CD4-positive, alpha-beta memory T cell (primary cell): ENCODE measurements at regions of chr2 and their contacts with region 1.

Region 1: GRCh38 chr2:218063486-218063885 is 5.6 kb upstream of the RUFY4 start:
- DNase-seq: no peak
- H3K4me3 ChIP-seq: no peak overlapping the region
- H3K4me3 Mint-ChIP-seq: no peak overlapping the region
- H3K27ac ChIP-seq: no peak overlapping the region
- H3K27ac Mint-ChIP-seq: peak overlapping the region in 1 of 7 donors; percentile 33
- H3K4me1 ChIP-seq: peaks cover 1% of the 10 kb centered on the region
- H3K4me1 Mint-ChIP-seq: peaks cover 0 to 2% (median 1%) of the 10 kb centered on the region in 4 donors
- H3K27me3 ChIP-seq: no peaks in the 10 kb centered on the region
- H3K27me3 Mint-ChIP-seq: peaks cover 14 to 38% of the 10 kb centered on the region in 2 donors

Region 2: DNA sequence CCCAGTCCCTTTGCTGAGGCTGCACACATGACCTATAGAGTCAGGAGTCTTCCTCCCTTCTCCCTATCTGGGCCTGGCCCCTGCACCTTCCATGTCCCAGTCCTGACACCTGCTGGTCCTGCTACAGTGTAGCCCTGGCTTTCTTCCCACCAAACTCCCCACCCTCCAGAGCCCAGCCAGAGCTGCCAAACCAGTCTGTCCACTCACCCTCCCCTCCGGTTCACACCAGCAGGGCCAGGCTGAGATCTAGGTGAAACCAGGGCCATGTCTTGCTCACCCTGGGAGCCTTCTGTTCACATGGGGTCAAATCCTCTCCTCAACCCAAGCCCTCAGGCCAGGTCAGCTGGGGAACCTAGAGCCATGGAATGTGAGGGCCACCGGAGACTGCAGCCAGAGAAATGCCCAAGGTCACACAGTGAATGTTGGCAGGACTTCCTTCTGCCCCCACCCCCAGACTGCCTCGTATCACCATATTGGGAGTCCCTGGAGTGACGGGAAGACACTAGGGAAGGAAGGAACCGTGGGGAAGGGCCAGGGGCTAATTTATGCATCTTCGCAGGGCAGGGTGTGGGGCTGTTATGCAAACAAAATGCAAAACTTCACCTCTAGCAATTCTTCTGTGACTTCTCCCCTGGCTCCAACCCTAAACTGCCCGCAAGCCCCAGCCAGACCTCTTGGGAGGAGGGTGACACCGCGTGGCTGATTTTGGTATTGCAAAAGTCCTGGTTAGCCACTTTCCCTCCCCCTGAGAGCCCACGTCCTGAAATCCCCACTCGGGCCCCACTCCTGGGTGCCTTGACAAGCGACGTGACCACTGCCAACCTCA is 75.3 kb before region 1 on chr2:
- CTCF ChIA-PET with region 1: no interaction called
- POLR2A ChIA-PET with region 1: no interaction called
- intact Hi-C with region 1: no loop called
- DNase-seq: peak in 4 of 5 donors; percentile 10 to 32 (median 26)
- H3K4me3 ChIP-seq: no peak overlapping the region
- H3K4me3 Mint-ChIP-seq: no peak overlapping the region
- H3K27ac ChIP-seq: no peak overlapping the region
- H3K27ac Mint-ChIP-seq: no peak overlapping the region
- H3K4me1 ChIP-seq: no peaks in the 10 kb centered on the region
- H3K4me1 Mint-ChIP-seq: peaks cover 0 to 3% (median 0%) of the 10 kb centered on the region in 4 donors
- H3K27me3 ChIP-seq: no peaks in the 10 kb centered on the region
- H3K27me3 Mint-ChIP-seq: peaks cover 2 to 3% of the 10 kb centered on the region in 2 donors

Region 3: GRCh38 chr2:218074031-218074430 is 10.5 kb after region 1 on chr2:
- CTCF ChIA-PET with region 1: interaction called, 11 read pairs
- POLR2A ChIA-PET with region 1: no interaction called
- intact Hi-C with region 1: no loop called
- DNase-seq: no peak
- H3K4me3 ChIP-seq: no peak overlapping the region
- H3K4me3 Mint-ChIP-seq: no peak overlapping the region
- H3K27ac ChIP-seq: no peak overlapping the region
- H3K27ac Mint-ChIP-seq: peak overlapping the region in 1 of 7 donors; percentile 62
- H3K4me1 ChIP-seq: peaks cover 5% of the 10 kb centered on the region
- H3K4me1 Mint-ChIP-seq: peaks cover 0 to 4% (median 2%) of the 10 kb centered on the region in 4 donors
- H3K27me3 ChIP-seq: no peaks in the 10 kb centered on the region
- H3K27me3 Mint-ChIP-seq: peaks cover 0 to 8% of the 10 kb centered on the region in 2 donors